Aorta (tissue), 5 donors: ENCODE measurements at regions of chr7 and their contacts with region 1.

Region 1: GRCh38 chr7:65037740-65038678 is 31.5 kb upstream of the ERV3-1 start:
- DNase-seq: peak; percentile 96 to 98
- ATAC-seq: peak; percentile 97
- H3K4me3 ChIP-seq: peak overlapping the region; percentile 63 to 96
- H3K27ac ChIP-seq: peak overlapping the region in 1 of 2 donors; percentile 56
- H3K4me1 ChIP-seq: no peaks in the 10 kb centered on the region
- H3K27me3 ChIP-seq: no peaks in the 10 kb centered on the region

Region 2: DNA sequence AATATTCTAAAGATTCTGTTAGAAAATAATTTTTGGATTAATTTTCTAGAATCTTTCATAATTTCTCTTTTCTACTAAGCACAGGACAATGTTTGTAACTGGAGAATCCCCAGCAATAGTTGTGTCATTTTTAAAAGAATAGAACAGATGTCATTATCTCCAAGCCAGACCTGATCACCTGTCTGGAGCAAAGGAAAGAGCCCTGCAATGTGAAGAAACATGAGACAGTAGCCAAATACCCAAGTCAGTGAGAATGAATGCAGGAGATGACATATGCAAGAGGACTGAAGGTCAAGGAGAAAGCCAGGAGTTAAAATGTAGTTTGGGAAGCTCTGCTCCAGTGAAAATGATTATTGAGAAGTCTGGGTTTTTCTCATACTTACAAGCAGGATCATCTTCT is 269.2 kb before region 1 on chr7:
- intact Hi-C with region 1: no loop called
- DNase-seq: no peak
- ATAC-seq: no peak
- H3K4me3 ChIP-seq: no peak overlapping the region
- H3K27ac ChIP-seq: no peak overlapping the region
- H3K4me1 ChIP-seq: no peaks in the 10 kb centered on the region
- H3K27me3 ChIP-seq: no peaks in the 10 kb centered on the region

Region 3: DNA sequence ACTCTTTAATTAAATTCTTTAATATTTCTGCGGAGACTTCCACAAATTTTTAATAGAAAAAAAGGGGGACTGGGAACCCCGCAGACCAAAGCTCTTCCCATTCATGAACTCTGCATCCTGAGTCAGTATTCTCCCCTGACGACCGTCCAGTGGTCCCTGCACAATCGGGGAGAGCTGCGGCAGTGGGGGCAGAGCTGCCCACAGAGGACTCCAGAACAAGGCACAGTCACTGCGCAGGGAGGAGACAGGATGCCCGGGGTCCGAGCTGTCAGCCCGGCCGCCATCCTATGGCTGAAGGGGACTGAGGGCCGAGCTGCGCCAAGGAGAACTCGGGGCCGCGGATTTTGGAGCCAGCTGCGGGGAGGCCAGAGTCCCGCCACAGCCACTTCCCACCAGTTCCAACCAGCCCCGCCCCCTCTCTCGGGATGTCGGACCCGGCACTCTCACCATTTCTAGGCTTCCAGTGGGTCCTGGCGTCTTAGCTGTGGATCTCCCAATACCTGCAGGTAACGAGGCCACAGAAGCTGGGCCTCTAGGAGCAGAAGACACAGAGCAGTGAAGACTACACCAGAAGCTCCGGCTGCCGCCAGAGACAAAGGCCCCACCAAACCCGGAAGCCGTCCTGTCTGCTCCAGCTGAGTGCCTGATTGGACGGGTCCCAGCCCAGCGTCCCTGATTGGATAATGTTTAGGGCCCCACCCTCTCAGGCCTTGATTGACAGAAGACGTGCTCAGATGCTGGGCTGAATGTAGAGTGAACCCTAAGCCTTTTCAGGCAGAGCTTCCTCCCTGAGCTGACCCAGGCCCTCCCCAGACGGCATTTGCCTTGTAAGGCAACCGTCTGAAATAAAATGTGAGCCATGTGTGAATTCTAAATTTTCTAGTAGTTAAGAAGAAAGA is 31.7 kb before region 1 on chr7 and contains the start of gene ERV3-1:
- intact Hi-C with region 1: loop called in 1 of 2 experiments (anchors 2 kb)
- DNase-seq: peak; percentile 97
- ATAC-seq: peak; percentile 99
- H3K4me3 ChIP-seq: peak within 1 kb of the TSS; percentile 7 to 90
- H3K27ac ChIP-seq: peak within 1 kb of the TSS in 1 of 2 donors; percentile 73
- H3K4me1 ChIP-seq: peaks cover 0 to 1% of the 10 kb centered on the region in 2 donors
- H3K27me3 ChIP-seq: no peaks in the 10 kb centered on the region
- total RNA-seq, gene ERV3-1: 22.0 to 31.3 TPM